ENCODE measurements at regions of chr11 and their contacts with region 1.

Region 1: GRCh38 chr11:9550191-9550628 is 23.3 kb upstream of the WEE1 start:
- DNase-seq: no peak
- ATAC-seq: no peak
- H3K4me3 ChIP-seq: no peak overlapping the region
- H3K27ac ChIP-seq: no peak overlapping the region
- H3K4me1 ChIP-seq: no peaks in the 10 kb centered on the region
- H3K27me3 ChIP-seq: no peaks in the 10 kb centered on the region
- CTCF ChIP-seq: no peak

Region 2: GRCh38 chr11:9344061-9344680 is 206.0 kb before region 1 on chr11:
- CTCF ChIA-PET with region 1: no interaction called
- POLR2A ChIA-PET with region 1: no interaction called
- intact Hi-C with region 1: no loop called
- DNase-seq: no peak
- ATAC-seq: no peak
- H3K4me3 ChIP-seq: no peak overlapping the region
- H3K27ac ChIP-seq: no peak overlapping the region
- H3K4me1 ChIP-seq: no peaks in the 10 kb centered on the region
- H3K27me3 ChIP-seq: no peaks in the 10 kb centered on the region
- CTCF ChIP-seq: no peak

Region 3: GRCh38 chr11:9601037-9601875 is 51.0 kb after region 1 on chr11:
- CTCF ChIA-PET with region 1: no interaction called
- POLR2A ChIA-PET with region 1: interaction called, 11 read pairs
- intact Hi-C with region 1: no loop called
- DNase-seq: no peak
- ATAC-seq: peak; percentile 29; the same call in 1 of the 2 replicates
- H3K4me3 ChIP-seq: no peak overlapping the region
- H3K27ac ChIP-seq: peak overlapping the region; percentile 73
- H3K4me1 ChIP-seq: peaks cover 17% of the 10 kb centered on the region
- H3K27me3 ChIP-seq: no peaks in the 10 kb centered on the region
- CTCF ChIP-seq: no peak

Measured in PC-3 (cell line).